Endothelial cell of umbilical vein (primary cell): ENCODE measurements at regions of chr4 and their contacts with region 1.

Region 1: DNA sequence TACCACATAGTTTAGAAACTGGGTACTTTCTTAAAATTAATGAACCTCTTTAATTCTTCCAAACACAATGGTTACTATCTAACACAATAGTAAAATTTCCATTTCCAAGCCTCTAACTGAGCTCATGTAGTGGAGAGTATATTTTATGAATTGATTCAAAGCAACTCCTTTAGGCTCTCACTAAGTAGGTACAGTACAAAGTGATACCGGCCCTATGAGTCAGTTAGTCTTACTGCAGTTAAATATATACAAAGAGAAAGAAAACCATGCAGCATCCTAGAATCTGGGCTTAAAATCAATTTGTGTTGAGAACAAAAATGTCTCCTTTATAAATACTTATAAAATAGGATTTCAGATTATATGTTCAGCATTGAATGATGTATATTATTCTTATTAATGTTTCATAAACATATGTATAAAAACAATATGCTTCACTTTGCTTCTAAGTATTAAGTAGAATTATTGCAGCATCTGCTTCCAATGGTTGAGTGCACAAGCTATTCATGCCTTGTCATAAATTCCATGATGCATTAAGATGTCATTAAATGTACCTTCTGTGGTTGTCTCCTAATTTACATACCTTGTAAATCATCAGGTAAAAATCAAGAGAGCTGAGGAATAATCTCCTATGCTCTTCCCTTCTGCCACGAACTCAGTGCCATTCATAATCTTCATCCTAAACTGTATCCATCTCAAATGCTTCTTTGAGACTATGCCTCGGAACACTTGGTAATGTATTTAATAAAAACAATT is 1037.8 kb downstream of the STPG2 start:
- DNase-seq: no peak
- H3K4me3 ChIP-seq: no peak overlapping the region
- H3K27ac ChIP-seq: no peak overlapping the region
- H3K4me1 ChIP-seq: no peaks in the 10 kb centered on the region
- H3K27me3 ChIP-seq: no peaks in the 10 kb centered on the region
- CTCF ChIP-seq: no peak
- POLR2A ChIP-seq: no peak

Region 2: GRCh38 chr4:97016186-97016907 is 89.2 kb before region 1 on chr4:
- CTCF ChIA-PET with region 1: no interaction called
- POLR2A ChIA-PET with region 1: no interaction called
- dilution Hi-C with region 1: no loop called
- intact Hi-C with region 1: no loop called
- DNase-seq: no peak
- H3K4me3 ChIP-seq: no peak overlapping the region
- H3K27ac ChIP-seq: no peak overlapping the region
- H3K4me1 ChIP-seq: no peaks in the 10 kb centered on the region
- H3K27me3 ChIP-seq: no peaks in the 10 kb centered on the region
- CTCF ChIP-seq: no peak
- POLR2A ChIP-seq: no peak

Region 3: DNA sequence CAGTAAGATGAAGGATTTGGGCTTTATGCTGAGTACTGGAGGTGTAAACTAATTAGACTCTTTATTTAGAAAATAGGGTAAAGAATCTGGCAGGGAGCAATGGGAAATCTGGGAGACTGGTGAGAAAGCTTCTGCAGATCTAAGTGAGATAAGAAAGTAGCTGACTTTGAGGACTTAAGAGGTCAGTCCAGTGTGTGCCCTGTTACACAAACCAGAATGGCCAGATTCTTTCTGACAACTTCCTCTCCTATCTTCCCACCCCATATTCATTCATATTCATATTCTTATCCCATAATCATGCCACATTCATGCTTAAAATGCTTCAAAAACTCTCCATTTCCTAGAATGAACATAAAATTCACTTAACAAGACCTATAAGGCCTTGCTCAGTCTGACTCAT is 68.8 kb after region 1 on chr4:
- CTCF ChIA-PET with region 1: no interaction called
- POLR2A ChIA-PET with region 1: no interaction called
- dilution Hi-C with region 1: no loop called
- intact Hi-C with region 1: no loop called
- DNase-seq: no peak
- H3K4me3 ChIP-seq: no peak overlapping the region
- H3K27ac ChIP-seq: no peak overlapping the region
- H3K4me1 ChIP-seq: no peaks in the 10 kb centered on the region
- H3K27me3 ChIP-seq: no peaks in the 10 kb centered on the region
- CTCF ChIP-seq: no peak
- POLR2A ChIP-seq: no peak

Region 4: DNA sequence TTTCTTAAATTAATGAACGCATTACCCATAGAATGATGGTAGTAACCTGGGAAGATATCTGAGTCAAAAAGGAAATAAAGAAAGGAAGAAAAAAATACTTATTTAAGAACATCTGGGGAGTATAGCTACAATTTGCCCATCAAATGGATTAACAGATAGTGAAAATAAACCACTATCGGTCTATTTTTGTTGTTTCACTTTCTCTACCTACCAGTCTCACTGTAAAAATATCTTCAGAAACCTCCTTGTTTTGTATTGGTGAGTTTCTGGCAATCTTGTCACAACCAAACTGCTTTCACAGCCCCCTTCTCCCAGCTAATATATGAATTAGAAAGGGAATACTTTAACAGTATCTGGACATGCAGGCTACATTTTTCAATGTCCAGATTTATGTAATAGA is 254.3 kb after region 1 on chr4:
- CTCF ChIA-PET with region 1: no interaction called
- POLR2A ChIA-PET with region 1: interaction called, 10 read pairs
- dilution Hi-C with region 1: no loop called
- intact Hi-C with region 1: no loop called
- DNase-seq: no peak
- H3K4me3 ChIP-seq: no peak overlapping the region
- H3K27ac ChIP-seq: no peak overlapping the region
- H3K4me1 ChIP-seq: no peaks in the 10 kb centered on the region
- H3K27me3 ChIP-seq: no peaks in the 10 kb centered on the region
- CTCF ChIP-seq: no peak
- POLR2A ChIP-seq: no peak